Left lung (tissue), 14 donors: ENCODE measurements at regions of chr2 and their contacts with region 1.

Region 1: DNA sequence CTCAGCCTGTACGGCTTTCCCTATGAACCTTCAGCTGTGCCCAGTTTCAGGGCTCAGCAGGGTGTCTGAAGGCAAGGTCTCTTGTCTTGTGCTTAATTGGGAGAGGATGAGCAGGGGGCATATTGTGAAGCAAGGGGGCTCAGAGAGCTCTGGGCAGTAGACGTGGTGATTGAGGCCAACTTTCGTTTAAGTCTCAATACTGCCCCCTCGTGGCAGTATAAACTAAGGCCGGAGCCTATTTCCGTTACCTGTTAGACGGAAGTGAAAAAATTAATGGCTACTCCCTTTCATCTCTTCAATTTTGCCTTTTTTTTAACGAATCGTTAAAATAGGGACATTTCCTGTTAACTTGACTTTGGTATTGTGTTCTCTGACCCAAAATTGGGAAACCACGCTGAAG is 193.4 kb downstream of the TDRD15 start:
- DNase-seq: peak in 1 of 4 donors; percentile 7
- ATAC-seq: peak; percentile 80
- H3K4me3 ChIP-seq: no peak overlapping the region
- H3K27ac ChIP-seq: no peak overlapping the region
- H3K4me1 ChIP-seq: no peaks in the 10 kb centered on the region
- H3K27me3 ChIP-seq: no peaks in the 10 kb centered on the region
- CTCF ChIP-seq: peak; percentile 54 to 63

Region 2: DNA sequence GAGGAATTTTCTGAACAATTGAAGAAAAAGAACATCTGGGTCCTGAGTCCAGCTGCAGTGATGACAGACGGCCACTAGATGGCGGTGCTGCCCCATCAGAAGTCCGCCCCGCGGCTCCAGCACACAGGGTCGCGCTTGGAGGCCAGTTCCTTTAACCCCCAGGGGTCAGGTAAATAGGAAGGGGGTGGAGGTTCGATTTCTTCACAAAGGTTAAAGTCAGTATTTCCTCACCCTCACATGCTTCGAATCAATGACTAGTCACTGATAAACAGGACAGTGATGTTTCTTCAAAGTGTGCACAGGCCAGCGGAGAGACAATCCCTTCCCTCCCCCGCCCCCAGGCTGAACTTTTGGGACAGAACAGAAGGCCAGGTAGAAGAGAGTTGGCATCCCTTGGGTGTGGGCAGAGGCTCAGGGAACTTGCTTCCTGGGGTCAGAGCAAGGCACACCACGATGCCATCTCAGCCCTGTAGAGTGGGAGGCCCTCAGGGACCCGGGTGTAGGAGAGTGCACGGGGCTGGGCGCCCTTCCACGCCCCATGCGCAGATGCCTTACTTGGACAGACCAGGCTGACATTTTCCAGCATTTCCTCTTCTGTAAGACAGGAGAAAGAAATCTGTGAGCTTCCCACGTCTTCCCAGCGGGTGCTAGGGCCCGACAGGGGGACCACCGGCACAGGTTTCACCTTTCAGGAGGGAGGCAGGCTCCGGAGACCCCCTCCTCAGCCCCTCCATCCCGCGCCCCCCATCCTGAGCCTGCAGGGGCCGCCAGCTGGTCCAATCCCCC is 274.0 kb before region 1 on chr2:
- intact Hi-C with region 1: loop called in 1 of 2 experiments (anchors 10 kb)
- DNase-seq: peak; percentile 53 to 90 (median 68)
- ATAC-seq: peak; percentile 86
- H3K4me3 ChIP-seq: no peak overlapping the region
- H3K27ac ChIP-seq: no peak overlapping the region
- H3K4me1 ChIP-seq: peaks cover 5 to 14% of the 10 kb centered on the region in 2 donors
- H3K27me3 ChIP-seq: peaks cover 0 to 48% of the 10 kb centered on the region in 2 donors
- CTCF ChIP-seq: peak; percentile 90 to 99

Region 3: DNA sequence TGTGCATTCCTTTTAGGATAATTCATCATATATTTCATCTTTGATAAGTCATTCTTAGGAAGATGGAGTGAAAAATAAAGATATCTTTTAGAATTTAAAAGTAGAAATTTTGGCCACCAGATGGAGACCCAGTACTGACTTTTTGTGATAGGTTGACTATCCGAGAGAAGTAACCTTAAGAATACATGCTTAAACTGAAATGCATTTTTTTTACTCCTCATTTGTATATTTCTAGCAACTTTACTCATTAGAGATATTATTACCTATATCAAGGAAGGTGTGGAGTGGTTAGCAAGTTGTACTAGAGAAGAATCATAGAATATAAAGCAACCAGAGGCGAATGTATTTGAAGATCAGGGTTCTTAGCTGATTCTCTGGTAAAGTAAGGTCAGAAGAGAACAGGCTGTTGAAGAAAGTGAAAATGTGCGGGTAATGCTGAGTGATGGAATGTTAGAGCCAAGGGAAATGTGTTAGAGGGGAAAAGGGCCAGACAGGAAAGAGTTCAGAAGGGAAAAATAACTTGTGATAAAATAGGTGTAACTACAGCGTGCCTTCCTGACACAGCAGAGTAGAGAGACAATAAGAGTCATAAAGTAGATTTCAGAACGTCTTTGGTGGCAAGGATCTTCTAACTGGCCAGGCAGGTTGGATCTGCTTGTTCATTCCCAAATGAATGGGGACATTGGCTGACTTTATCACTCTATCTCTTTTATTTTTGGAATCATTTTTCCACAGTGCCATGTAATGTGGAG is 141.1 kb before region 1 on chr2:
- intact Hi-C with region 1: loop called in 1 of 2 experiments (anchors 10 kb)
- DNase-seq: peak in 1 of 4 donors; percentile 27
- ATAC-seq: no peak
- H3K4me3 ChIP-seq: no peak overlapping the region
- H3K27ac ChIP-seq: no peak overlapping the region
- H3K4me1 ChIP-seq: no peaks in the 10 kb centered on the region
- H3K27me3 ChIP-seq: peaks cover 0 to 6% of the 10 kb centered on the region in 2 donors
- CTCF ChIP-seq: no peak